Activated CD4-positive, alpha-beta memory T cell treated with anti-CD3 and anti-CD28 coated beads for 36 hours (primary cell): ENCODE measurements at regions of chr1 and their contacts with region 1.

Region 1: GRCh38 chr1:160251687-160252526 is 10.4 kb downstream of the DCAF8 start:
- DNase-seq: peak; percentile 57
- H3K4me3 Mint-ChIP-seq: no peak overlapping the region
- H3K27ac Mint-ChIP-seq: peak overlapping the region; percentile 5
- H3K4me1 Mint-ChIP-seq: peaks cover 11% of the 10 kb centered on the region
- H3K27me3 Mint-ChIP-seq: no peaks in the 10 kb centered on the region

Region 2: DNA sequence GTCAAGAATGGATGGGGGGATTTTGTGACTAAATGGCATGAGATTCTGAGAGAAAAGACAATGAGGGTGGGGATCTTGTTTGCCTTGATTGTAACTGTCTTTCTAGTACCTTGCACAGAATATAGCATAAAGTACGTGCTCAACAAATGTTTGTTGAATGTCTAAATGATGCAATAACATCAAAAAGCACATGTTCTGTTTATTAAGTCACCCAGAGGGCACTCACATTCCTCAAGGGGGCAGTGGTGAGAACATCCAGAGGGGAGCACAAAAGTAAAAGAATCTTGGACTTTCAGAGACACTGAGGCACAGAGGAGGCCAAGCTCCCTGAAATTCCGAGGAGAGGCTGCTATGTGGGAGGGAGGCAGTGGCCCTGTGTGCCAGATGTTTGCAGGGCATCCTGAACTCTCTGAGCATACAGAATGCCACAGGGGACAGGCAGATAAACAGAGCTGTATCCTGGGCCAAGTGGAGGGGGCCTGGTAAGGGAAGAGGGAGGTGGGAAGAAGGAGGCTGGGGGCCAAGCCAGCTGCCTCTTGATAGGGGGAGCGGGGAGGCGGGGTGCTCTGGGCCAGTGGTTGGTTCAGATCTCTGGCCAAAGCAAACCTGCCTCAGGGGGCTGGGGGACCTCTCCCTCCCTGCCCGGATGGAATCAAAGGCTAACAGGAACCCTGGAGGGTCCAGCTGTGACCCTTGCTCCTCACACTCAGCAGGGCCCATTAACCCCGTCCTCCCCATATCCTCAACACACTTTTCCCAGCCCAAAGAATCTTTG is 142.8 kb before region 1 on chr1:
- CTCF ChIA-PET with region 1: interaction called, 53 read pairs
- POLR2A ChIA-PET with region 1: no interaction called
- intact Hi-C with region 1: no loop called
- DNase-seq: peak; percentile 47
- H3K4me3 Mint-ChIP-seq: no peak overlapping the region
- H3K27ac Mint-ChIP-seq: no peak overlapping the region
- H3K4me1 Mint-ChIP-seq: no peaks in the 10 kb centered on the region
- H3K27me3 Mint-ChIP-seq: peaks cover 3% of the 10 kb centered on the region

Region 3: GRCh38 chr1:160205242-160206035 is 46.5 kb before region 1 on chr1 and contains the start of gene PEA15:
- CTCF ChIA-PET with region 1: interaction called, 23 read pairs
- POLR2A ChIA-PET with region 1: no interaction called
- intact Hi-C with region 1: no loop called
- DNase-seq: peak; percentile 80
- H3K4me3 Mint-ChIP-seq: peak within 1 kb of the TSS; percentile 87
- H3K27ac Mint-ChIP-seq: peak within 1 kb of the TSS; percentile 82
- H3K4me1 Mint-ChIP-seq: peaks cover 54% of the 10 kb centered on the region
- H3K27me3 Mint-ChIP-seq: no peaks in the 10 kb centered on the region
- total RNA-seq, gene PEA15: 51.8 to 51.9 TPM

Region 4: GRCh38 chr1:160226623-160227022 is 25.3 kb before region 1 on chr1:
- CTCF ChIA-PET with region 1: interaction called, 15 read pairs
- POLR2A ChIA-PET with region 1: no interaction called
- intact Hi-C with region 1: no loop called
- DNase-seq: no peak
- H3K4me3 Mint-ChIP-seq: no peak overlapping the region
- H3K27ac Mint-ChIP-seq: no peak overlapping the region
- H3K4me1 Mint-ChIP-seq: no peaks in the 10 kb centered on the region
- H3K27me3 Mint-ChIP-seq: no peaks in the 10 kb centered on the region

Region 5: DNA sequence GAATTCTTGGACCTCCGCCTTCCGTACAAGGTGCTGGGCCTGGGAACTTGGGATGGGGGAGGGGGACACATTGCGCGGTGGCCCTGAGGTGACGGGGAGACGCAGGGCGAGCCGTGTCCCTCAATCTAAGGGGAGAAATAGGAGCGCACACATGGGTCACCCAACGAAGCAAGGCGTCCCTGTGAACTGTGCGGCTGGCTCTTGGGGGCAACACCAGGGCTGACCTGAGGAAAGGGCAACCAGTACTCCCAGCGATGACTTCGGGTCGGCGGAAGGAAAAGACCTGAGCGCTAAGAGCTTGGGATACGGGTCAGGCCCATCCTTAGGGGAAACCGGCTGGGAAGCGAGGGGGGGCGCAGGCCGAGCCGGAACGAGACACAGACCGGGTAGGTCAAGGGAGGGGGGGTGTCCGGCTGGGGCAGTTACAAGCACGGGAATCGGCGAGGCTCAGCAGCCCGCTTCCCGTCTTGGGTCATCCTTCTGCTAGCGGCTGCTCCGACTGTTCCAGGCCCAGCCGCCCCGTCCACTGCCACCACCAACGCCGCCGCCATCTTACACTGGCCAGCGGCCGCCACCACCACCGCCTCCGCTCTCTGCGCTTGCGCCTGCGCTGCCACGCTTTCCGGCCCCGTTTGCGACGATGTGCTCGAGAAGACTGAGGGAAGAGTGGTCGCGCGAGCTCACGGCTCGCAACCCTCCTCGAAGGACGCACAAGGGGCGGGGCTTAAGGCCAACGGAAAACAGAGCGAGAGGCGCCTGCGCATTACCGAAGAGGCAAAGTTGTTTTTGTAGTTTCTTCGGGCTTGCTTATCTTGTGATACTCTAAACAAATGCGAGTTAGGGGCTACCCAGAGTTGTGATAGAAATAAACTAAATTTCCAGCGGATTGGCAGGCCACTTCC is 10.2 kb after region 1 on chr1 and contains the start of gene DCAF8:
- CTCF ChIA-PET with region 1: interaction called, 56 read pairs
- POLR2A ChIA-PET with region 1: interaction called, 8 read pairs
- intact Hi-C with region 1: no loop called
- DNase-seq: peak; percentile 99
- H3K4me3 Mint-ChIP-seq: peak within 1 kb of the TSS; percentile 96
- H3K27ac Mint-ChIP-seq: peak within 1 kb of the TSS; percentile 99
- H3K4me1 Mint-ChIP-seq: peaks cover 45% of the 10 kb centered on the region
- H3K27me3 Mint-ChIP-seq: no peaks in the 10 kb centered on the region
- total RNA-seq, gene DCAF8: 142 to 150 TPM

Region 6: DNA sequence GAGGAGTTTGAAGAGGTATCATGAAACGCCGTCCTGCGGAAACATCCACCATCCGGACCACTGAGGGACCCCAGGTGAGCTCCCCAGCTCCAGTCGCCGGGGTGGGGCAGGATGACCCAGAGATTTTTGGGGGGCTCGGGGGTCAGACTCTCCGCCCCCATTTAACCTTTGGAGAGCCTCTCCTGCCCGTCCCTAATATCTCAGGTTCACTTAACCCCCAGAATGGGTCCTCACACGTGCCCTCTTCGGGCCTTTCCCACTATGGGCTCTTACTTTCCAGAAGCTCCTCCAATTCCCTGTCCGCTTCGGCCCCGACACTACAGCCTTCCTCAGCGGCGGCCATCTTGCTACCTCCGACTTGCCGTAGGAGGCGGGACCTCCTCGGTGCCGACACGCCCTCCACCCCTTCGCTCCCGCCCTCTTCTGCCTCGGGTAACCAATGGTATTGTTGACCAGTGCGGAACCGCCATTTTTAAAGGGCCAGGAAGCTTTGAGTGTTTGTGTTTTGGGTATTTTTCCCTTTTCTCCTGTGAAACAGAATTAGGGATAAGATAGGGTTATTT is 33.0 kb after region 1 on chr1 and contains the start of gene PEX19:
- CTCF ChIA-PET with region 1: interaction called, 69 read pairs
- POLR2A ChIA-PET with region 1: interaction called, 4 read pairs
- intact Hi-C with region 1: no loop called
- DNase-seq: peak; percentile 97
- H3K4me3 Mint-ChIP-seq: peak within 1 kb of the TSS; percentile 96
- H3K27ac Mint-ChIP-seq: peak within 1 kb of the TSS; percentile 90
- H3K4me1 Mint-ChIP-seq: peaks cover 20% of the 10 kb centered on the region
- H3K27me3 Mint-ChIP-seq: no peaks in the 10 kb centered on the region
- total RNA-seq, gene PEX19: 50.0 to 61.1 TPM

Region 7: GRCh38 chr1:160768295-160768657 is 516.4 kb after region 1 on chr1:
- CTCF ChIA-PET with region 1: no interaction called
- POLR2A ChIA-PET with region 1: no interaction called
- intact Hi-C with region 1: no loop called
- DNase-seq: peak; percentile 93
- H3K4me3 Mint-ChIP-seq: peak overlapping the region; percentile 78
- H3K27ac Mint-ChIP-seq: peak overlapping the region; percentile 96
- H3K4me1 Mint-ChIP-seq: peaks cover 28% of the 10 kb centered on the region
- H3K27me3 Mint-ChIP-seq: no peaks in the 10 kb centered on the region